ENCODE measurements at regions of chr13 and their contacts with region 1.

Region 1: DNA sequence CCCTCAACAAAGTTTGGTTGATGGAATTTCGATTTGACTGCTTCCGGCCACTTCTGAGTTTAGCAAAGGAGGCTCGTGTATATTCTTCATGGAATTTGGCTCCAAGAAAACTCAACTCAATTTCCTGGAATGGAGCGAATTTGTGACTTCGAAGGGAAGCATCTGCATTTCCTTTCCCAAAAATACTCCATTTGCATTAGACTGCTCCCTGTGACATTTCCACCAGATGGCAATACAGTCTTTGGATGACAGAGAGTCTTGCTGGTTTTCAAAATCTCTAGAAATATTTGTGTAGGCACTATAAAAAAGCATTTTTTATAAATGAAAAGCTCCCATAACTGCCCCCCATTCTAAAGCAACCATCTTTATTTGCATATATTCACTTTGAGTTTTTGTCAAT is 4.1 kb downstream of the C1QTNF9 start:
- DNase-seq: peak; percentile 39
- H3K4me3 ChIP-seq: no peak overlapping the region
- H3K27ac ChIP-seq: no peak overlapping the region
- H3K4me1 ChIP-seq: no peaks in the 10 kb centered on the region
- H3K27me3 ChIP-seq: no peaks in the 10 kb centered on the region; the same call in none of the 2 replicates

Region 2: DNA sequence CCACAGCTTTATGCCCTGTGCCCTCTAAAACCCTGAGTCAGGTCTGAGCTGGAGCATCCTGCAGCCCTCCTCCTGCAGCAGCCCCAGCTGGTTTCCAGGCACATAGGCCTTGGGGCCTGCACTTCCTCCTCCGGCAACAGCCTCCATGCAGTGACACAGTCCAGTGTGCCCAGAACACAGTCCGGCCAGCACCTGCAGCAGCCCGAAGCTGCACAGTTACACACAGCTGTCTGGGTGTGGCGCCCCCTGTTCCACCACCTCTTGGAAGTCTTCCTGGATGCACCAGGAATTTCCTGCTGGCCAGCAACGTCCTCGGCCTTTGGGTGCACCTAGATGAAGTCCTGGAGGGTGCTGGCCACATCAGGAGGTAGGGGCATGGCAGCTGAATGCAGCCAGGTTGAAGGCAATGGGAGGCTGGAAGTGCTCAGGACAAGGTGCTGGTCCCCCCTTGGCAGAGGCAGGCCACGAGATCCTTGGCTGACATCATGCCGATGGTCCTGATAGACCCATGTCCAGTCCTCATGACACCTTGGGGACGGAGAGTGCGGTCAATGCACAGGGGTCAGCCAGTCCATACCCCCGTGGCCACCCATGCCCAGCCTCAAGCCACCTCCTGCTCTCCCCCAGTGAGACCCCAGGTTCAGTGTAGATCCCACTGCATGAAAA is 226.2 kb after region 1 on chr13:
- in situ Hi-C with region 1: loop called (anchors 10 kb)
- DNase-seq: no peak
- H3K4me3 ChIP-seq: no peak overlapping the region
- H3K27ac ChIP-seq: no peak overlapping the region
- H3K4me1 ChIP-seq: no peaks in the 10 kb centered on the region
- H3K27me3 ChIP-seq: peaks cover 35% of the 10 kb centered on the region

Measured in GM23248 (cell line).